ENCODE measurements at regions of chr9 and their contacts with region 1.

Region 1: DNA sequence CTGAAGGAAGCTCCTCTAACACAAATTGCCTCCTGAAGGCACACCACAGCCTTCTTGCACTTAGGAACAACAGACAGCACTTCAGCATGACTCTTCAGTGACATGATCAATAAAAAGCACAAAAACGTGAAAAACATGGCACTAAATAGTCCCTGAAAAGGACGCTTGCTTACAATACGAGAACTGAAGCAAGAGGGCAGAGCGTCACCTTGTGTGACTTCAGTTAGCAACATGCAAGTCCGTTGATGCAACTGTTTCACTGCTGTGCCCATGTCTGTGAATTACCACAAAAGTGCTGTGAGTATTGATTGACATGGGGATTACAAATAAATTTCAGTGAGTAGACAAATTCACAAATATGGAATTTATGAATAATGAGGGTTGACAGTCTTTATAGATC is 219.9 kb upstream of the GAS1 start:
- DNase-seq: no peak
- ATAC-seq: no peak

Region 2: GRCh38 chr9:87107072-87107471 is 60.1 kb before region 1 on chr9:
- intact Hi-C with region 1: loop called (anchors 5 kb)
- DNase-seq: no peak
- ATAC-seq: no peak